Activated CD4-positive, alpha-beta T cell treated with anti-CD3 and anti-CD28 coated beads, Interleukin-2, amount 10 ng/mL, durations not matched to agents 24 days and 14 days (primary cell): ENCODE measurements at regions of chr3 and their contacts with region 1.

Region 1: GRCh38 chr3:195129644-195130492 is 141.1 kb downstream of the XXYLT1 start:
- DNase-seq: peak; percentile 64
- H3K4me3 Mint-ChIP-seq: peak overlapping the region; percentile 61
- H3K27ac Mint-ChIP-seq: peak overlapping the region; percentile 89
- H3K4me1 Mint-ChIP-seq: peaks cover 22% of the 10 kb centered on the region
- H3K27me3 Mint-ChIP-seq: no peaks in the 10 kb centered on the region

Region 2: DNA sequence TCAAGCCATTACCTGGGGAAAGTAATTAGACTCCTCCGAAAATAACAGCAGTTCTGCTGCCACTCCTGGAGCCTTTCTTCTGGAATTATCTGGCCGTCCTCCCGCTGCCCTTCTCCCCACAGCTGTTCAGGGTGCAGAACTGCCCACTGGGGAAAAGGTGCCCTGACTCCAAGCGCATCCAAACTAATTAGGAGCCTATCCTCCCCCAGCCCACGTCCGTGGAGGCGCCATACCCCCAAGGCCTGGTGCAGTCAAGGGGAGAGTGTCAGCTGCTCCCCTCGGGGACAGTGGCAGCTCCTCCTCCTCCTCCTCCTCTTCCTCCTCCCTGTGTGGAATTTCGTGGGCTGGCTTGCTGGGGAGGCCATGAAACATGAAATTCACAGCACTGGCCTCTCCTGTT is 36.1 kb before region 1 on chr3:
- intact Hi-C with region 1: no loop called
- DNase-seq: no peak
- H3K4me3 Mint-ChIP-seq: no peak overlapping the region
- H3K27ac Mint-ChIP-seq: no peak overlapping the region
- H3K4me1 Mint-ChIP-seq: peaks cover 4% of the 10 kb centered on the region
- H3K27me3 Mint-ChIP-seq: peaks cover 3% of the 10 kb centered on the region

Region 3: GRCh38 chr3:195147649-195148095 is 17.8 kb after region 1 on chr3:
- intact Hi-C with region 1: loop called (anchors 2 kb)
- DNase-seq: peak; percentile 88
- H3K4me3 Mint-ChIP-seq: peak overlapping the region; percentile 78
- H3K27ac Mint-ChIP-seq: peak overlapping the region; percentile 75
- H3K4me1 Mint-ChIP-seq: peaks cover 34% of the 10 kb centered on the region
- H3K27me3 Mint-ChIP-seq: no peaks in the 10 kb centered on the region

Region 4: GRCh38 chr3:195182470-195182795 is 52.6 kb after region 1 on chr3:
- intact Hi-C with region 1: loop called (anchors 2 kb)
- DNase-seq: no peak
- H3K4me3 Mint-ChIP-seq: no peak overlapping the region
- H3K27ac Mint-ChIP-seq: no peak overlapping the region
- H3K4me1 Mint-ChIP-seq: peaks cover 43% of the 10 kb centered on the region
- H3K27me3 Mint-ChIP-seq: no peaks in the 10 kb centered on the region

Region 5: DNA sequence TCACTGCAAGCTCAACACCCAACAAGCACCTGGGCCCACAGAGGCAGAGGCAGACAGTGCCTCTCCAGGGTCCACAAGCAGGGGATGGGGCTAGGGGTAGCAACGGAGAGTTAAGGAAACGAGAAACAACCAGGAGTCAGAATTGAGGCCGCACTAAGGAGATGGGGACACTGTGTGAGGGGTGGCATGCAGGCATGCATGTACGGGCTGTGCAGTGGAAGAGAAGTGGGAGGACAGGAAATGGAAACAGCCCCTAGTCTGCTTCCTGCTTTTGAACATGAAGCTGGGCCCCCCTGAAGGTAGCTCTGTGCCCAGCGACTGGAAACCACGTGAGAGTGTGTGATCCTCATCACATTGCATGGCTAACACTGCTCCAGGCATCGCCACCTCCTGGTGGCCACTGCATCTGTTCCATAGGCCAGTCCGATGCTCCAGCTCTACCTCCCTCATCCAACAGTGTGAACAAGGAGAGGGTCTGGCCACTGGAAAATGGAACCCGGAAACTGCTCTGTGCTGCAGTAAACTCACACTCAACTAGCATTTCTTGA is 97.1 kb after region 1 on chr3:
- intact Hi-C with region 1: no loop called
- DNase-seq: no peak
- H3K4me3 Mint-ChIP-seq: no peak overlapping the region
- H3K27ac Mint-ChIP-seq: no peak overlapping the region
- H3K4me1 Mint-ChIP-seq: peaks cover 5% of the 10 kb centered on the region
- H3K27me3 Mint-ChIP-seq: peaks cover 7% of the 10 kb centered on the region